Activated CD8-positive, alpha-beta memory T cell treated with anti-CD3 and anti-CD28 coated beads, Interleukin-2, amount 10 ng/mL, durations not matched to agents 7 days and 5 days (primary cell): ENCODE measurements at regions of chr20 and their contacts with region 1.

Region 1: DNA sequence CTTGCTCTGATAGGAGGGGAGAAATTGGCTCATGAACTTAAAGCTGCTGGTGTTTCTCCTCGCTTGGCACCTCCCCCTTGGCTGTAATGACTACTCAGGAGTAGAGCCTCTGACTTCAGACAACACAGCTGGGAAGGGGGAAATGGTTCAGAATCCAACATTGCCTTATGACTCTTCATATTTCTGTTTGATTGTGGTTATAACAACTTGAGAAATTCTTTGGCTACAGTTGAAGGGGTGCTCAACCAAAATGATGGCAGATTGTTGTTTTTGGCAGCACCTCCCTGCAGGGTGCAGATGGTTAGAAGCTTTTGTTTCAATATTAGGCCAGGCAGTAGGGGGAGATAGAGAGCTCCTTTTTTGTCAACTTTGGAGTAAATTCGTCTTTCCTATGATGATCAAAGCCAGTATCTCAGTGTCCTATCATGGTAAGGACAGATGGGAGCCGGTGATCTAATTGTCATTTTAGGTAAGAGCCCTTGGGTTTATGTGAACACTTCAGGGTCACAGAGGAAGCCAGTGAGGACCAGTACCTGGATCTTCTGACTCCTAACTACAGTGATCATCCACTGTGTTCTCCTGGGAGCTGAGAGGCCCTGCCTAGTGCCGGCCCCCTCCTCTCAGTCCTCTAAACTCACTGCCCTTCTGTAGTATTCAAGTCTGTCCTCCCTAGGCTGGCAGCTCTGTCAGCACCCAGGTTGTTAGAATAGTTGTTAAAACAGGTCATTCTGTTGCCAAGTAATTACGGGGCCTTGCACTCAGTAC is 39.9 kb downstream of the RPRD1B start:
- DNase-seq: no peak
- ATAC-seq: peak; percentile 55
- H3K4me3 Mint-ChIP-seq: no peak overlapping the region
- H3K27ac Mint-ChIP-seq: no peak overlapping the region
- H3K4me1 Mint-ChIP-seq: peaks cover 2% of the 10 kb centered on the region
- H3K27me3 Mint-ChIP-seq: no peaks in the 10 kb centered on the region

Region 2: DNA sequence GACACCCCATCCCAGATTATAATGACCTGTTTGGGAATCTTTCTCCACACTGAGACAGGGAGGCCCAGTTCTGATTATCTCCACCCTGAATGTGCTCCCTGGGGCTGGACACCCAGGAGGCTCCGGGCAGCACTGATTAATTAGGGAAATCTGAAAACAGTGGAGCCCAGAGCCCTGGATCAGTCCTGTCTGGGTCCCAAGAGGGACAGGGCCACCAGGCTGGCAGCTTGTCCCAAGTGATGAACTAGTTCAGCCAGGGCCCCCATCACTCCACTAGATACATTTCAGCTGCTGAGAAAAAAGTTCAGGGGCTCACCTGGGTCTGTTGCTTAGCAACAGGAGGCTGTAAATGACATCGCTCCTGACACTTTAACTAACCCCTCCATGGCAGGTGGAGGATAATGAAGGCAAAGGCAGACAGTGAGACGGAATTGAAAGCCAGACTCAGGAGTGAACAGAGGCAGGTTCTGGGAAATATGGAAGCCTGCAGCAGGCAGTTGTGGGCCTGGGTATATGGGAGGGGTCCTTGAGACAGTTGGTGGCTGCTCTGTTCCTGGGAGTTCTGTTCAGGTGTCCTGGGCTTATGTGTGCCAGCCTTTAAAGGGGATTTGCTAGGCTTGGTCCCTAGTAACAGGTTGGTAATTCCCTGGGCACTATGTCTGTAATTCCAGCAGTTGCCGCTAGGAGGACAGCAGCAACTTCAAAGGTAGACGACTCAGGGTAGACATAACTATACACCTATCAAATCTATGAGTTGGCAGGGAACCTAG is 458.0 kb before region 1 on chr20:
- CTCF ChIA-PET with region 1: no interaction called
- DNase-seq: peak; percentile 48
- ATAC-seq: no peak
- H3K4me3 Mint-ChIP-seq: no peak overlapping the region
- H3K27ac Mint-ChIP-seq: no peak overlapping the region
- H3K4me1 Mint-ChIP-seq: no peaks in the 10 kb centered on the region
- H3K27me3 Mint-ChIP-seq: peaks cover 28% of the 10 kb centered on the region

Region 3: DNA sequence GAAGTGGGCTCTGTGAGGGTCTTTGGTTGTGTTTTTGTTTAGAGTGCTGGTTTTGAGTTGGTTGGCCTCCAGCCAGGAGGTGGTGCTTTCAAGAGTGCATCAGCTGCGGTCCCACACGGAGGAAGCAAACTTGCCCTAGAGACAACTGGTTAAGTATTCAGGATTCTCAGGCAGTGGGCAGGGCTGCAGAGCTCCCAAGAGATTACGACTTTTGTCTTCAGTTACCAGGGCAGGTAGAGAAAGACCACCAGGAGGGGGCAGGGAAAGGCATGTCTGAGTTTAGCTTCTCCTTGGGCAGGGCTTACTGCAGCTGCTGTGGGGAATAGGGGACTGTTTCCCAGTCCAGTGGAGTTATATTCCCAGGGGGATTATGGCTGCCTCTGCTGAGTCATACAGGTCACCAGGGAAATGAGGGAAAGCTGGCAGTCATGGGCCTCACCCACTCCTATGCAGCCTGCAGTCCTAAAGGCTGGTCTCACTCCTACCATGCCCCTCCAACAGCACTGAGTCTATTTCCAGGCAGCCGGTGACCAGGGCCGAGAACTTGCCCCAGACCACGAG is 104.6 kb before region 1 on chr20:
- CTCF ChIA-PET with region 1: no interaction called
- DNase-seq: no peak
- ATAC-seq: no peak
- H3K4me3 Mint-ChIP-seq: no peak overlapping the region
- H3K27ac Mint-ChIP-seq: no peak overlapping the region
- H3K4me1 Mint-ChIP-seq: no peaks in the 10 kb centered on the region
- H3K27me3 Mint-ChIP-seq: peaks cover 17% of the 10 kb centered on the region

Region 4: DNA sequence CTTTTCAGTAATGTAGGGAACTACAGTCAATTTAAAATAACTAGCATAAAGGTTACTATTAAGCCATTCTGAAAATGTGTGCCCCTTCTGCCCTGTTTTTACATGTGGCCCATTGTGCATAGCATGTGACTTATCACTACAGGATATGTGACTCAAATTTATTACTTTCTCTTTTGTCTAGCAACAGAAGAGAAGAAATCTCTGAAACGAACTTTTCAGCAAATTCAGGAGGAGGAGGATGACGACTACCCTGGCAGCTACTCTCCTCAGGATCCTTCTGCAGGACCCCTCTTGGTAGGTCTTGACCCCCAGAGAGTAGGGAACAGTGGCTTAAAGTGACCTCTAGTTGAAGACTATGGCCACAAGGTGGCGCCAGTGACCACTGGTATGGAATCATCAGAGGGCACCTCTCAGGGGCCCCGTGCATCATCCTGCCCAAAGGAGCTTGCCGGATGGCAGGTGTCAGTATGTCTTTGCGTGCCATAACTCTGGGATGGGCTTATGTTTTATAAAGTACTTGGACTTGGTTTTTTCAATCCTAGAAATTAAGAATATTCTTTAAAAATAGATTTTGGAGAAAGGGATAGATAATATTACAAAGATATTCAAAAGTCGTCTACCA is 16.0 kb before region 1 on chr20:
- CTCF ChIA-PET with region 1: interaction called, 32 read pairs
- DNase-seq: peak; percentile 82
- ATAC-seq: peak; percentile 88
- H3K4me3 Mint-ChIP-seq: no peak overlapping the region
- H3K27ac Mint-ChIP-seq: peak overlapping the region; percentile 44
- H3K4me1 Mint-ChIP-seq: peaks cover 24% of the 10 kb centered on the region
- H3K27me3 Mint-ChIP-seq: no peaks in the 10 kb centered on the region

Region 5: DNA sequence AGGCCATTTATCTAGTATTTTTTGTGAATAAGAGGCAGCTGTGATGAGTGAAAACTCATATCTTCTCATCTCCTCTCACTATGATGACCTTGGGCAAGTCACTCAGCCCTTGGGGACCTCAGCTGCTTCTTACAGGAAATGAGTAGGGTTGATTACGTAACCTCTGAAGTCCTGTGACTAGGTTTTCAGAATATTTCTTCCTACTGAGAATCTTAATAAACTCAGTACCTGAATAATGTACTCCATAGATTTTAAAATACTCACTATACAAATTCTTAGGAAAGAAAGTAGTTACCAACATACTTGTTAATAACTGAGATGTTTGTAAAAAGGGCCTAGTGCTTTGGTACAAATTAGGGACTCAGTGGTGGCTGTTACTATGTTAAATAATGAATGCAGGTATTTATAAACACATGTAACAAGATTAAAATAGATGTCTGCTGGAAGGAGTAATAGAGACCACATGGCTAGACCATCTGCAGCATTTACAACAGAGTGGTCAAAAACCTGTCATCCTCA is 20.9 kb after region 1 on chr20:
- CTCF ChIA-PET with region 1: interaction called, 15 read pairs
- DNase-seq: peak; percentile 72
- ATAC-seq: peak; percentile 93
- H3K4me3 Mint-ChIP-seq: no peak overlapping the region
- H3K27ac Mint-ChIP-seq: peak overlapping the region; percentile 65
- H3K4me1 Mint-ChIP-seq: peaks cover 46% of the 10 kb centered on the region
- H3K27me3 Mint-ChIP-seq: peaks cover 5% of the 10 kb centered on the region

Region 6: DNA sequence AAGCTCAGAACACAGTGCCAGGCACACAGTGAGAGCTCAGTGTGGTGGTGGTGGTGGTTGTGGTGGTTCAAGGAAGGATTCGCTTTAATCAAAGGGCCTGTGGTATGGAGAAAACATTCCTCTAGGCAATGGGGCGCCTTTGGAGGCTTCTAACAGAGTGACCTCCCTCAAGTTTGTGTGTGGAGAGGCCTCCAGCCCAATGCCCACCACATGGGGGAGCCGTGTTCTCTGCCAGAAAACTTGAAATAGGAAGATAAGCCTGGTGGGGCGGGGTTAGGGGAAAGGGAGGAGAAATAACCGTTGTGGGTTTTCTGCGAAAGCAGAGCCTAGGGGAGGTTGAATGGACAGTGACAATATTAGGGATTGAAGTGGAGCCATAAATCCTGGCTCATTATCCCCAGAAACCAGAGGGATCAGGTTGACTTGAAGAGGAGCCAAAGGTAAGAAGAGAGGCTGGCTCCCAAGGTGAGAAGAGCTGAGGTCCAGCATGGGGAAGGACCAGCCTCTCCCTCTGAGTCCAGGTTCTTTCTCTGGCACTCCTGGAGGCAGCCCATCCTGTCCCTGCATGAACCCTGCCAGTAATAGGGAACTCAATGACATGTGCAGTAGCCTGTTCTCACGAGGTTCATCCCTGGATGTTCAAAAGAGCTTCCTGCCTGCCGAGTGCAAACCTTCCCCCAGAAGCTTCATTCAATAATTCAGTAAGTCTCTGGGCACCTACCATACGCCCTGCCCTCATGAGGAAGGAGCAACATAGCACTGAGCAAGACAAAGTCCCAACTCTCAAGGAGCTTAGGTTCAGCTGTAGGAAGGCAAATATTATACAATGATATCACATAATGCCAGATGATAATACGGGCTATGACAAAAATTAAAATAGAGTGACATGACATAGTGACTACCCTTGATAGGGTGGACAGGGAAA is 40.2 kb after region 1 on chr20:
- CTCF ChIA-PET with region 1: interaction called, 12 read pairs
- DNase-seq: peak; percentile 69
- ATAC-seq: peak; percentile 57
- H3K4me3 Mint-ChIP-seq: no peak overlapping the region
- H3K27ac Mint-ChIP-seq: peak overlapping the region; percentile 12
- H3K4me1 Mint-ChIP-seq: peaks cover 10% of the 10 kb centered on the region
- H3K27me3 Mint-ChIP-seq: peaks cover 20% of the 10 kb centered on the region

Region 7: GRCh38 chr20:38156888-38157634 is 83.6 kb after region 1 on chr20:
- CTCF ChIA-PET with region 1: no interaction called
- DNase-seq: no peak
- ATAC-seq: no peak
- H3K4me3 Mint-ChIP-seq: no peak overlapping the region
- H3K27ac Mint-ChIP-seq: no peak overlapping the region
- H3K4me1 Mint-ChIP-seq: peaks cover 28% of the 10 kb centered on the region
- H3K27me3 Mint-ChIP-seq: no peaks in the 10 kb centered on the region